PC-3 (cell line): ENCODE measurements at regions of chr15 and their contacts with region 1.

Region 1: GRCh38 chr15:80776420-80777045 is 2.6 kb upstream of the CEMIP start:
- DNase-seq: peak; percentile 74
- ATAC-seq: no peak
- H3K4me3 ChIP-seq: no peak overlapping the region
- H3K27ac ChIP-seq: peak overlapping the region; percentile 74
- H3K4me1 ChIP-seq: peaks cover 27% of the 10 kb centered on the region
- H3K27me3 ChIP-seq: 0 out of 2 replicates have a peak, but pooled peaks cover 4% of the 10 kb centered on the region
- CTCF ChIP-seq: peak; percentile 80

Region 2: DNA sequence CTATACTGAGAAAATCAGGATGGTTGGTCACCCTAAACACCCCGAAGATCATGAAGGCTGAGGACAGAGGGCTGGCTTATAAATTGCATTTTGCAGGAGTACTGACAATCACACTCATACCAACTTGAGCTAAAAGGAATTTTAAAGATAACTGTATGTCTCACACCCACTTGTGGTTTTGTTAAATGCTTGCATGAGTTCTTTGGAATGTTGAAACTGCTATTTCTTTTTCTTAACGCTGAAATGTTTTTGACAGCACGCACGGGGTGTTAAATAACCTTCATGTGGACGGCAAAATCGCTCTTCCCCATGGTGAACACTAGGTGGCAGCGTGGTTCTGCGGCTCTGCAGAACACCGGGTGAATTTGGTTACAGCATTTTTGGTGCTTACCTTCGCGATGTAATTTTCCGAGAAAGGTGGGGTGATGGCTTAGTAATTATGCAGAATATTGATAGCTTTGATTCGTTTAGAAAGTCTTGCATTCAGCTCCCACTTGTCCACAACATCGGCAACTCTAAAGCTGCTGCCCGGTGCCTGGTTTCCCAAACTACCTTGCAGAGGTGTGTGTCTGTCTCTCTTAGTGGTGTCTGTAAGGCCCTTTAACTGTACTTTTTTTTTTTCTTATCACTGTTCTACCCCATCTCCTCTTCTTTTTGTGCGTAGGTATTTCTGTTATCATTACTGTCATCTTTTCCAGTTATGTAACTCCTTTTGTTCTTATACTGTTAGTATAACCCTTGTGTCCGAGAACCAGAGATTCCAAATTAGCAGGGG is 320.7 kb before region 1 on chr15:
- CTCF ChIA-PET with region 1: no interaction called
- POLR2A ChIA-PET with region 1: no interaction called
- intact Hi-C with region 1: loop called (anchors 1 kb)
- DNase-seq: peak; percentile 85
- ATAC-seq: peak; percentile 77
- H3K4me3 ChIP-seq: 0 out of 2 replicates have a peak overlapping the region, but pooled peaks have one; percentile 1
- H3K27ac ChIP-seq: no peak overlapping the region
- H3K4me1 ChIP-seq: peaks cover 12% of the 10 kb centered on the region
- H3K27me3 ChIP-seq: no peaks in the 10 kb centered on the region
- CTCF ChIP-seq: peak; percentile 95

Region 3: GRCh38 chr15:80588801-80589200 is 187.7 kb before region 1 on chr15:
- CTCF ChIA-PET with region 1: interaction called, 3 read pairs
- POLR2A ChIA-PET with region 1: no interaction called
- intact Hi-C with region 1: loop called (anchors 1 kb)
- DNase-seq: peak; percentile 93
- ATAC-seq: peak; percentile 88
- H3K4me3 ChIP-seq: no peak overlapping the region
- H3K27ac ChIP-seq: peak overlapping the region; percentile 97
- H3K4me1 ChIP-seq: peaks cover 45% of the 10 kb centered on the region
- H3K27me3 ChIP-seq: no peaks in the 10 kb centered on the region
- CTCF ChIP-seq: no peak

Region 4: DNA sequence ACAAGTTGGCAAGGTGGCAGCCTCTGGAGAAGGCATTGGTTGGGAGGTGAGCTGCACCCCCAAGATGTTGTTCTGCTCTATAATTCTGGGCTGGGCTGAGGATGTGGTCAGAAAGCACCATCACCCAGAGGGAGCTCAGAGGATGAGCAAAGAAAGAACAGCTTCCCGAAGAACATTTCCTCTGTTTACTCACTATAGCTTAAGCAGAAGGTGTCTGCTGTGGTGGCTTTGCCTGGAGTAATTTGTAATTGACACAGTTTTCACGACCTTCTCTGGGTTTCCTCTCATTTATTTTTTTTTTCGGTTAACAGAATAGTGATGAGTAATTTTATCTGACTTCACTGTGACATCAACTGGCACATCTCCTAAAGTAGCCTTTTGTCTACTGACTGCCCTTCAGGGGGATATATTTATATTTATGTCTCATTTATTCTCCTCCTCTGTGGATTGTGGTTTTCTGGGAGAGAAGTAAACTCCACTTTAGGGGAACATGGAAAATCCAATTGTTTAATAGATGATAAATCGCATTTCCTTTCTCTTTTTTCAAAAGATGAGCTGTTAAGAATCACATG is 131.0 kb before region 1 on chr15:
- CTCF ChIA-PET with region 1: interaction called, 10 read pairs
- POLR2A ChIA-PET with region 1: no interaction called
- intact Hi-C with region 1: no loop called
- DNase-seq: no peak
- ATAC-seq: no peak
- H3K4me3 ChIP-seq: no peak overlapping the region
- H3K27ac ChIP-seq: 0 out of 2 replicates have a peak overlapping the region, but pooled peaks have one; percentile 9
- H3K4me1 ChIP-seq: no peaks in the 10 kb centered on the region
- H3K27me3 ChIP-seq: no peaks in the 10 kb centered on the region
- CTCF ChIP-seq: no peak

Region 5: GRCh38 chr15:80695104-80695910 is 81.2 kb before region 1 on chr15 and contains the start of gene ABHD17C:
- CTCF ChIA-PET with region 1: interaction called, 7 read pairs
- POLR2A ChIA-PET with region 1: no interaction called
- intact Hi-C with region 1: loop called (anchors 5 kb)
- DNase-seq: peak; percentile 64
- ATAC-seq: peak; percentile 63
- H3K4me3 ChIP-seq: peak within 1 kb of the TSS; percentile 96
- H3K27ac ChIP-seq: peak within 1 kb of the TSS; percentile 76
- H3K4me1 ChIP-seq: peaks cover 68% of the 10 kb centered on the region
- H3K27me3 ChIP-seq: no peaks in the 10 kb centered on the region
- CTCF ChIP-seq: no peak
- total RNA-seq, gene ABHD17C: 10.3 and 14.2 TPM in 2 replicates

Region 6: DNA sequence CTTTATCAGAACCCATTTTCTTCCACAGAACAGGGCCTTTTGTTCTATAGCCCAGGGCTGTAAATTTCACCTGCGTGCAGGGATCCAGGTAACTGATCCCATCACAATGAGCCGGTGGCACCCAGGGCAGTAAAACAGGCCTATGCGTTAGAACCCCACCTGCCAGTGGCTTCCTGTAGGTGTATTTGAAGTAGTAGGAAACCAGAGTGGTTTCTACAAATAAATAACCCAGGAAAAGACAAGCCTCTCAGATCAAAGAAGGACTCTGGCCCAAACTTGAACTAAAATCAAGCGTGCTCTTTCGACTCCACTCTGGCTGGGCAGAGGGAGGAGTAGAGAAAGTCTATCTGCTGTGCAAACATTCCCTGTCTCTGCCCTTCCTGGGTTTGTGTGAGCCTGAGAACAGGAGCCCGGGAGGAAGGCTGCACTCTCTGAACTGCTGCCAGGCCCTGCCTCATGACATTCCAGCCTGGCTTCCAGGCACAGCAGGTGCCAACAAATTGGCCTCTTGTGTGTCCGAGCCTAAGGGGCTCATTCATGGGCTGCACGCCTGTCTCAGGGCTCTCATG is 80.4 kb after region 1 on chr15:
- CTCF ChIA-PET with region 1: interaction called, 7 read pairs
- POLR2A ChIA-PET with region 1: no interaction called
- intact Hi-C with region 1: loop called (anchors 2 kb)
- DNase-seq: peak; percentile 82
- ATAC-seq: peak; percentile 82
- H3K4me3 ChIP-seq: no peak overlapping the region
- H3K27ac ChIP-seq: peak overlapping the region; percentile 84
- H3K4me1 ChIP-seq: peaks cover 48% of the 10 kb centered on the region
- H3K27me3 ChIP-seq: no peaks in the 10 kb centered on the region
- CTCF ChIP-seq: no peak

Region 7: GRCh38 chr15:80970018-80970658 is 193.6 kb after region 1 on chr15:
- CTCF ChIA-PET with region 1: interaction called, 9 read pairs
- POLR2A ChIA-PET with region 1: no interaction called
- intact Hi-C with region 1: loop called (anchors 1 kb)
- DNase-seq: peak; percentile 78
- ATAC-seq: peak; percentile 78
- H3K4me3 ChIP-seq: peak overlapping the region; percentile 5; the same call in 1 of the 2 replicates
- H3K27ac ChIP-seq: peak overlapping the region; percentile 29
- H3K4me1 ChIP-seq: peaks cover 19% of the 10 kb centered on the region
- H3K27me3 ChIP-seq: no peaks in the 10 kb centered on the region
- CTCF ChIP-seq: peak; percentile 87